CD8-positive, alpha-beta memory T cell (primary cell): ENCODE measurements at regions of chr12 and their contacts with region 1.

Region 1: DNA sequence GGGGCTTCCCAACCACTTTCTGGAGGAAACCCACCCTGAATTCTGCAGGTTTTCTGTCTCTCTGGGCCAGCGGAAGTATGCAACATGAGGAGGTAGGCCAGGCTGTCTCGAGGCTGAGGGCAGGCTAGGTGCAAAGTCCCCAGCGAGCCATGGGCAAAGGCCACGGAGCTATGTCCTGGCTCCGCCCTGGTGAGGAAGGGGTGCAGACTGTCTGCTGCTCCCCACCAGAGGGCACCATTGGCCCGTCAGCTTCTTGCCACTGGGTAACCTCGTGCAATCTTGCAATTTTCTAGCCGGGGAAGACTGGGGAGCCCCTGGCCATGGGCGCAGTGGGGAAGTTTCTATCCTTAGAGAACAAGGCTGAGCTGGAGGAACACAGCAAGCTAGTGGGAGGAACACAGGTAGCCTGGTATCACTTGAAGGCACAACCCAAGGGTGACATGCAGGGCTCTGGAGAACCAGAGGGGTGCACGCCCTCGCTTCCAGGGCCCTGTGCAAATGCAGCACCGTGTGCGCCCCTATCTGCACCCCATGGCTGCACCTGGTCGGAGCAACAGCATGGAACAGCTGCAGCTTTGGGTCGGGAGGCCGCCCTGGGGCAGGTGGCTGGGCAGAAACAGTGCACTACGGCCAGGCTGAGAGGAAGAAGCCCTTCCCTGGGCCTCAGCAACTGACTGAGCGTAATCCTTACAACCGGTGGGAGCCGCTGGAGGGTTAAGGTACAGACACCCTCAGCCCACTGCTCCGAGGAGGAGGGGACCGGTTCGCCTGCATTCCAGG is 27.6 kb upstream of the RPLP0 start:
- DNase-seq: peak; percentile 81 to 91 (median 83)
- H3K4me3 ChIP-seq: peak overlapping the region; percentile 48
- H3K4me3 Mint-ChIP-seq: peak overlapping the region; percentile 38 to 88 (median 71)
- H3K27ac ChIP-seq: peak overlapping the region; percentile 70
- H3K27ac Mint-ChIP-seq: peak overlapping the region; percentile 43 to 94 (median 86)
- H3K4me1 ChIP-seq: peaks cover 81% of the 10 kb centered on the region
- H3K4me1 Mint-ChIP-seq: peaks cover 79 to 84% (median 80%) of the 10 kb centered on the region in 3 donors
- H3K27me3 ChIP-seq: no peaks in the 10 kb centered on the region
- H3K27me3 Mint-ChIP-seq: peaks cover 0 to 1% of the 10 kb centered on the region in 2 donors

Region 2: GRCh38 chr12:120216742-120217605 is 11.5 kb before region 1 on chr12:
- CTCF ChIA-PET with region 1: interaction called, 39 read pairs
- POLR2A ChIA-PET with region 1: no interaction called
- DNase-seq: no peak
- H3K4me3 ChIP-seq: no peak overlapping the region
- H3K4me3 Mint-ChIP-seq: no peak overlapping the region
- H3K27ac ChIP-seq: no peak overlapping the region
- H3K27ac Mint-ChIP-seq: no peak overlapping the region
- H3K4me1 ChIP-seq: no peaks in the 10 kb centered on the region
- H3K4me1 Mint-ChIP-seq: peaks cover 0 to 4% (median 0%) of the 10 kb centered on the region in 3 donors
- H3K27me3 ChIP-seq: no peaks in the 10 kb centered on the region
- H3K27me3 Mint-ChIP-seq: peaks cover 0 to 1% of the 10 kb centered on the region in 2 donors

Region 3: GRCh38 chr12:120265473-120266179 is 37.1 kb after region 1 on chr12 and contains the start of gene PXN:
- CTCF ChIA-PET with region 1: interaction called, 727 read pairs
- POLR2A ChIA-PET with region 1: interaction called, 101 read pairs
- DNase-seq: peak; percentile 87 to 95 (median 90)
- H3K4me3 ChIP-seq: peak within 1 kb of the TSS; percentile 97
- H3K4me3 Mint-ChIP-seq: peak within 1 kb of the TSS; percentile 82 to 98 (median 94)
- H3K27ac ChIP-seq: peak within 1 kb of the TSS; percentile 82
- H3K27ac Mint-ChIP-seq: peak within 1 kb of the TSS; percentile 85 to 98 (median 91)
- H3K4me1 ChIP-seq: peaks cover 44% of the 10 kb centered on the region
- H3K4me1 Mint-ChIP-seq: peaks cover 41 to 48% (median 42%) of the 10 kb centered on the region in 3 donors
- H3K27me3 ChIP-seq: no peaks in the 10 kb centered on the region
- H3K27me3 Mint-ChIP-seq: peaks cover 0 to 2% of the 10 kb centered on the region in 2 donors
- total RNA-seq, gene PXN: 33.7 to 35.9 TPM

Region 4: GRCh38 chr12:120292661-120293531 is 64.4 kb after region 1 on chr12 and contains the start of gene RNU4-1:
- CTCF ChIA-PET with region 1: interaction called, 31 read pairs
- POLR2A ChIA-PET with region 1: interaction called, 45 read pairs
- DNase-seq: peak; percentile 52 to 90 (median 85)
- H3K4me3 ChIP-seq: peak within 1 kb of the TSS; percentile 91
- H3K4me3 Mint-ChIP-seq: no peak within 1 kb of the TSS
- H3K27ac ChIP-seq: peak within 1 kb of the TSS; percentile 100
- H3K27ac Mint-ChIP-seq: no peak within 1 kb of the TSS
- H3K4me1 ChIP-seq: peaks cover 16% of the 10 kb centered on the region
- H3K4me1 Mint-ChIP-seq: peaks cover 4 to 7% (median 5%) of the 10 kb centered on the region in 3 donors
- H3K27me3 ChIP-seq: no peaks in the 10 kb centered on the region
- H3K27me3 Mint-ChIP-seq: no peaks in the 10 kb centered on the region
- total RNA-seq, gene RNU4-1: 628 to 678 TPM